Colonic mucosa (tissue), 4 donors: ENCODE measurements at regions of chr4 and their contacts with region 1.

Region 1: GRCh38 chr4:123399627-123400358 is 3.2 kb downstream of the SPRY1 start:
- DNase-seq: no peak
- H3K4me3 ChIP-seq: peak overlapping the region; percentile 55
- H3K27ac ChIP-seq: peak overlapping the region; percentile 95
- H3K4me1 ChIP-seq: no peaks in the 10 kb centered on the region
- H3K27me3 ChIP-seq: no peaks in the 10 kb centered on the region
- CTCF ChIP-seq: no peak

Region 2: DNA sequence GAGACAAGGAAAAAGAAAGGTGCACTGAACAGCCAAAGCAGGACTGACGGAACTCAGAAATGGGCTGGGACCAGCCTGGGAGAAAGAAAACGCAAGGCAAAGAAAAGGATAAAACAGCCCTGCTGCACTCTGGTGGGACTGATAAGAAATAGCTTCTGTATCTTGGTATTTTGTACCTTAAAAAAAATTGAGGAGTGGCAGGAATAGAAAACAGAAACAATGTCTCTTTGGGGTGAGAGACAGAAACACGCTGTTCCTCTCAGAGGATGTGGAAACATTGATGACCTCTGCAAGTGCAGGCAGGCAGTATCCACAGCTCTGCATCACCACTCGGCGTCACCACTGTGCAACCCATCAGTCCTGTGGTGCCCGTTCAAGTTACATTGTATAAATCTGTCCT is 155.7 kb before region 1 on chr4:
- intact Hi-C with region 1: no loop called
- DNase-seq: no peak
- H3K4me3 ChIP-seq: no peak overlapping the region
- H3K27ac ChIP-seq: no peak overlapping the region
- H3K4me1 ChIP-seq: no peaks in the 10 kb centered on the region
- H3K27me3 ChIP-seq: no peaks in the 10 kb centered on the region
- CTCF ChIP-seq: no peak

Region 3: DNA sequence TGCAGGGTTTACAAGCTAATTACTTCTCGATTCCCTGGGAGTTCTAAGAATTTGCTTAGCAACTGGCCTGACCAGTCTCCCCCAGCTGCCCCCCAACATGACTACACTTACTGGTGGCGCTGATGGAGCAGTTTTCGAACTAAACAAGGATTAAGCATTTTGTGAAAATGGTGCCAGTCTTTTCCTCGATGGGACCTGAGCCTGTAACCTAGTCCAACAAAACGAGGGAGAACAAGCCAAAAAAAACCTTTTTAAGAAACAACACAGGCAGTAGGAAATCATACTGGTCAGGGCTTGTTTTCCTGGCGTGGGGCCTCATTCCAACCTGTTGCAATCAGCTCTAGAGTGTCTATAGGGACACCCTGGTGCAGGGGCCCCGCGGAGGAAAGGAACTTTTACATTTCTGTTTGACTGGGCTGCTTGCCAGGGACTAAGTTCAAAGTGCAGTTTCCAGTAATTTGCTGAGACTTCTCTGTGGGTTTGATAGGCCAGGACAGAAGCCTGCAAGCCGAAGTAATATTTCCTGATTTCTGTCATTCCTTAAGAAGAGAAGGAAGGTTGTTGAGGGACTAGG is 155.5 kb after region 1 on chr4:
- intact Hi-C with region 1: loop called (anchors 10 kb)
- DNase-seq: peak; percentile 96
- H3K4me3 ChIP-seq: no peak overlapping the region
- H3K27ac ChIP-seq: peak overlapping the region; percentile 91
- H3K4me1 ChIP-seq: peaks cover 6% of the 10 kb centered on the region
- H3K27me3 ChIP-seq: no peaks in the 10 kb centered on the region
- CTCF ChIP-seq: no peak

Region 4: GRCh38 chr4:123661080-123661737 is 261.4 kb after region 1 on chr4:
- intact Hi-C with region 1: loop called (anchors 5 kb)
- DNase-seq: no peak
- H3K4me3 ChIP-seq: no peak overlapping the region
- H3K27ac ChIP-seq: no peak overlapping the region
- H3K4me1 ChIP-seq: no peaks in the 10 kb centered on the region
- H3K27me3 ChIP-seq: no peaks in the 10 kb centered on the region
- CTCF ChIP-seq: peak; percentile 46

Region 5: GRCh38 chr4:124386648-124387047 is 986.9 kb after region 1 on chr4:
- intact Hi-C with region 1: no loop called
- DNase-seq: no peak
- H3K4me3 ChIP-seq: no peak overlapping the region
- H3K27ac ChIP-seq: no peak overlapping the region
- H3K4me1 ChIP-seq: no peaks in the 10 kb centered on the region
- H3K27me3 ChIP-seq: no peaks in the 10 kb centered on the region
- CTCF ChIP-seq: no peak